ENCODE measurements at regions of chr9 and their contacts with region 1.

Region 1: DNA sequence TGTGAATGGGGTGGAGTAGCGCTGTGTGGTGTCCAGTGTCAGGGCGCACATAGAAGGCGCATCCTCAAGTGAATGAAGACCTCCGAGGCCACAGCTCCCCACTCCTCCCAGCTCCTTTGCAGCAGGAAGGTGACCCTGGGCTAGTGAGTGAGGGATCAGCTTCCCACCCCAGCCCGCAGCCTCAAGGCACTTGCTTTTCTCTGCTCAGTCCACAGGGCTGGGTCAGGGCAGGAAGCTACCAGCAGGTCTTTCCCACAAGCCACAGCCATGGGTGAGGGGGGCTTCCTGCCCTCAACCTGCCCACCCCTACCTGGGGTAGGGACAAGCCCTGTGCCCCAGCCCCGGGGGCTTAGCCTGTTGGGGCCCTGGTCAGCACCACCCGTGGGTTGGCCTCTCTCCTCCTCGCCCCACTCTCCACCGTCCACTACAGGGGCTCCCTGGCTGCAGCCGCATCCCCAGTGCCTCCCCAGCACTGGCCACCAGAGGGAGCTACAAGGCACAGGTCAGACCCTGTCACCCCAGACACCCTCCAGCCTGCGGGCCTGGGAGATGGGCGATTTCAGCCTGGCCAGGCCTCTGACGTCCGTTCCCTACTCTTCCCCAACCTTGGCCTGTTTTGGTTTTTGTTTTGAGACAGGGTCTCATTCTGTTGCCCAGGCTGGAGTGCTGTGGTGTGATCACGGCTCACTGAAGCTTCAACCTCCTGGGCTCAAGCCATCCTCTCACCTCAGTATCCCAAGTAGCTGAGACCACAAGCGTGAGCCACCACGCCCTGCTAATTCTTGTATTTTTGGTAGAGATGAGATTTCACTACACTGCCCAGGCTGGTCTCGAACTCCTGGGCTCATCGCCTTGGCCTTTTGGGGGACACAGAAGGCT is 1.3 kb upstream of the ABCA2 start:
- DNase-seq: peak; percentile 78
- H3K27ac ChIP-seq: peak overlapping the region; percentile 81
- CTCF ChIP-seq: peak; percentile 99

Region 2: DNA sequence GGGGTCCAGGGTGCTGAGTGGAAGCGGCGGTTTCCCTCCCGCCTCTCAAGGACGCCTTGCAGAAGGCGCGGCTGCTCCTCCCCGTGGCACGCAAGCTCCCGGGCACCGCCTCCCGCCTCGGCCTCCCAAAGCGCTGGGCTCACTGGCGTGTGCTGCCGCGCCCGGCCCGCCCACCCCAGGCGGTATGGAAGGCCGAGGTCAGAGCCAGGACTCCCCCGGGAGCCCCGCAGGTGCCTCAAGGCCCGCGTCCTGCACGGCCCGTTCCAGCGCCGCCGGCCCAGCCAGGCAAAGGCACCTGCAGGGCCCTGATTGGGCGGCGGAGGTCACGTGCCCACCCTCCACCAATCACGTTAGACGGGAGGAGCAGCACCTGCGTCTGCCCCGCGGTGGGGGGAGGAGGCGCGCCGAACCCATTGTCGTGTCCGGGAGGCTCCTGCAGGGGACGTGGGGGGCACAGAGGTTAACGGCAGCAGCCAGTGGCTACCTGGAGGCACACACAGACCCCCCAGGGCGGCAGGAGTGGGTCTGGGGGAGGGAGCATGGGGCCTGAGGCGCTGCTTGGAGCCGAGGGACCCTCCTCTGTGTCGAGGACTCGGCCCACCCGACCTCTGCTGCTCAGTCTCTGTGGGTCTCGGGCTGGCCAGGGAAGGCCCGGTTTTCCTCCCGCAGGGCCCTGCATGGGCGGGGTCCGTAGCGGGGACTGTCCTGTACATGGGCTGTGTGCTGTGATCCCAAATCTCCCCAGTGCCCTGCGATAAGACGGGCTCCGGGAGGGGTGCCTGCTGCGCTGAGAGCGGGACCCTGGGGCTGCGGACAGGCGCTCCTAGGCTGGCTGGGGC is 79.3 kb before region 1 on chr9:
- CTCF ChIA-PET with region 1: interaction called, 97 read pairs
- POLR2A ChIA-PET with region 1: interaction called, 9 read pairs
- DNase-seq: peak; percentile 100
- H3K27ac ChIP-seq: peak overlapping the region; percentile 89
- CTCF ChIP-seq: no peak; the same call in 1 of the 2 replicates

Region 3: DNA sequence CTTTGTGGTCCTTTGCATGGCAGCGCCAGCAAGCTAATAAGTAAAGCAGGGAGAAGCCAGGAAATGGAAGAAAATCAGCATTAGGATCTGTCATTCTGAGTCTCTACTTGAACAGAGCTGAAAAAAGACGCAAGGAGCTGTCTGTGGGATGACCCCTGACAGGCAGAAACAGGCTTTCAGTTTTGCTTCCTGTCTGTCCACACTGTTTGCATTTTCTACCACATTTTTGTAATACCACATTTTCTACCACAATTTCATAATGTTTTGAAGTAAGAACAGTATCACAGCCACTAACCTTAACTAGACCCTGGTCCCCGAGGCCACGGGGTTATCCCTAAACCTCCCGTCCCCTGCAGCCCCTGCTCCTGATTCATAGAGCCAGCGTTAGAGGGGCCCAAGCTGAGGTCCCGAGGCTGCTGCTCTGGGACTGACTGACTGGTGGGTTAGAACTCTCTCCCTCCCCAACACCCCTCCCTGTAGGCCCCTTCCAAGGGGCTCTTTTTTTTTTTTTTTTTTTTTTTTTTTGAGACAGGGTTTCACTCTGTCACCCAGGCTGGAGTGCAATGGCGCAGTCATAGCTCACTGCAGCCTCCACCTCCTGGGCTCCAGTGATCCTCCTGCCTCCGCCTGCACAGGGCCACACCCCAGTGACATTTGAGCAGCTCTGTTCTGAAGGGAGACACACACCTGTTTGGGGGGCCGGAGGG is 29.0 kb before region 1 on chr9:
- CTCF ChIA-PET with region 1: interaction called, 16 read pairs
- POLR2A ChIA-PET with region 1: no interaction called
- DNase-seq: no peak
- H3K27ac ChIP-seq: peak overlapping the region; percentile 93
- CTCF ChIP-seq: no peak

Region 4: DNA sequence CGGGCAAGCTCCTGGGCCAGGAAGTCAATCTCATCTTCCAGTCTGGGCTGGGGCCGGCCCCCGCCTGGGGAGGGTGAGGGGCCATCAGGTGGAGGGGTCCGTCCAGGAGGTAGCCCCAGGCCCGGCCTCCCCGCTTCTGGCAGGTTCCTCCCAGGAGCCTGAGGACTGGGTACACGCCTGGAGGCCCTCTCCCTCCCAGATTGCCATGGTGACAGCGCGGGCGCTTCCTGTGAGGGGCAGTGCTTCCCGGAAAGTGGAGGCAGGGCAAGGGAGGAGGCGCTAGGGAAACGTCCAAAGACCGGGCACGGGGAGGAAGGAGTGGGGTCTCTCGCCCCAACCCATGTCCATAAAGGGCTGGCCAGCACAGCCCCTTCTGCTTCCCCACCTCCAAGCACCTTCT is 11.8 kb after region 1 on chr9:
- CTCF ChIA-PET with region 1: interaction called, 63 read pairs
- POLR2A ChIA-PET with region 1: no interaction called
- DNase-seq: no peak
- H3K27ac ChIP-seq: no peak overlapping the region
- CTCF ChIP-seq: no peak

Region 5: DNA sequence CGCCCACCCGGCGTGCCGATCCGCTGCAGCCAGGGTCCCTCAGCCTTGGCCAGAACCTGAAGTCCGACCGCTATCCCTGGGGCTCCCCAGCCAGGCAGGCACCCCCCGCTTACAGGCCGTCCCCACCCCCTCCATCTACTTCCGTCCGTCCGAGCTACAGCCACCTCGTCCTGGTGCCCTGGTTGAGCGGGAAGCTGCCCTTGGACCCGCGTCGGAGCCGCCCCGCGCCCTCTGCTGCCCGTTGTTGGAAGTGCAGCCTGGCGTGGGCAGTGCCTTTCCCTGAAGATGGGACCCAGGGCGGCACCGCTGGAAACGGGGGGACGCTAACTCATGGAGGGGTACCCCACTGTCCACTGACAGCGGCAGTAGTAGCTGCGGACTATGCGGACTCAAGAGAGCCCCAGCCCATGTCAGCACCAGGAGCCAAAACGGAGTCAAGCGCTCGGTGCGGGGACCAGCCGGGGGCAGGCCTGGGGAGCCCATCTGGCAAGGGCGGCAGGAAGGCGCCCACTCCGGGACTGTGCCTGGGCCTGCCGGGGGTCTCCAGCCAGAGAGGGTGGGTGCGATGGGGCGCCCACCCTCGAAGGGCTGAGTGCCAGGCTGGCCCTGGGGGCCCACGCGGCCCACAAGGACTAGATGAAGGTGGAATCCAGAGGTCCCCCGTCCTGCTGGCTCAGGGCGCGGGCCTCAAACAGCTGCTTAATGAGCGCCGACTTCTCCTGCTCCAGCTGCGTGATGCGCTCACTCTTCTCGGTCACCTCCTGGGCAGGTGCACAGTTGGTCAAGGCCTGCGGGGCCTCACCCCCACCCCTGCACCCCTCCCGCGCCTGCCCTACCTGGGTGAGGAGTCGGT is 35.0 kb after region 1 on chr9:
- CTCF ChIA-PET with region 1: interaction called, 31 read pairs
- POLR2A ChIA-PET with region 1: no interaction called
- DNase-seq: peak; percentile 71
- H3K27ac ChIP-seq: peak overlapping the region; percentile 85
- CTCF ChIP-seq: peak; percentile 100

Measured in RWPE1 (cell line).